ENCODE measurements at regions of chr1 and their contacts with region 1.

Region 1: DNA sequence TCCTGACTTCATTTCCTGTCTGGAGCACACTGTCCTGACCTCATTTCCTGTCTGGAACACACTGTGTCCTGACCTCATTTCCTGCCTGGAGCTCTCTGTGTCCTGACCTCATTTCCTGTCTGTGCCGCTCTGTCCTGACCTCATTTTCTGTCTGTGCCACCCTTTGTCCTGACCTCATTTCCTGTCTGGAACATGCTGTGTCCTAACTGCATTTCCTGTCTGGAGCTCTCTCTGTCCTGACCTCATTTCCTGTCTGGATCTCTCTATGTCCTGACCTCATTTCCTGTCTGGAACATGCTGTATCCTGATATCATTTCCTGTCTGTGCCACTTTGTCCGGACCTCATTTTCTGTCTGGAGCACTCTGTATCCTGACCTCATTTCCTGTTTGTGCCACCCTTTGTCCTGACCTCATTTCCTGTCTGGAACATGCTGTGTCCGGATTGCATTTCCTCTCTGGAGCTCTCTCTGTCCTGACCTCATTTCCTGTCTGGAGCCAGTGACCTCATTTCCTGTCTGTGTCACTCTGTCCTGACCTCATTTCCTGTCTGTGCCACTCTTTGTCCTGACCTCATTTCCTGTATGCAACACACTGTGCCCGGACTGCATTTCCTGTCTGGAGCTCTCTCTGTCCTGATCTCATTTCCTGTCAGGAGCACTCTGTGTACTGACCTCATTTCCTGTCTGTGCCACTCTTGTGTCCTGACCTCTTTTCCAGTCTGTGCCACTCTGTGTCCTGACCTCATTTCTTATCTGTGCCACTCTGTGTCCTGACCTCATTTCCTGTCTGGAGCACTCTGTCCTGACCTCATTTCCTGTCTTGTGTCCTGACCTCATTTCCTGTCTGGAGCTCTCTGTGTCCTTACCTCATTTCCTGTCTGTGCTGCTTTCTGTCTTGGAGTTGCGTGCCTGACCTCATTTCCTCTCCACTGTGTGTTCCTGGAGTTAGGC is 27.6 kb downstream of the SKI start:
- DNase-seq: peak; percentile 65
- ATAC-seq: peak; percentile 67
- H3K4me3 Mint-ChIP-seq: no peak overlapping the region
- H3K27ac Mint-ChIP-seq: no peak overlapping the region
- H3K4me1 Mint-ChIP-seq: peaks cover 26% of the 10 kb centered on the region
- H3K27me3 Mint-ChIP-seq: no peaks in the 10 kb centered on the region

Region 2: DNA sequence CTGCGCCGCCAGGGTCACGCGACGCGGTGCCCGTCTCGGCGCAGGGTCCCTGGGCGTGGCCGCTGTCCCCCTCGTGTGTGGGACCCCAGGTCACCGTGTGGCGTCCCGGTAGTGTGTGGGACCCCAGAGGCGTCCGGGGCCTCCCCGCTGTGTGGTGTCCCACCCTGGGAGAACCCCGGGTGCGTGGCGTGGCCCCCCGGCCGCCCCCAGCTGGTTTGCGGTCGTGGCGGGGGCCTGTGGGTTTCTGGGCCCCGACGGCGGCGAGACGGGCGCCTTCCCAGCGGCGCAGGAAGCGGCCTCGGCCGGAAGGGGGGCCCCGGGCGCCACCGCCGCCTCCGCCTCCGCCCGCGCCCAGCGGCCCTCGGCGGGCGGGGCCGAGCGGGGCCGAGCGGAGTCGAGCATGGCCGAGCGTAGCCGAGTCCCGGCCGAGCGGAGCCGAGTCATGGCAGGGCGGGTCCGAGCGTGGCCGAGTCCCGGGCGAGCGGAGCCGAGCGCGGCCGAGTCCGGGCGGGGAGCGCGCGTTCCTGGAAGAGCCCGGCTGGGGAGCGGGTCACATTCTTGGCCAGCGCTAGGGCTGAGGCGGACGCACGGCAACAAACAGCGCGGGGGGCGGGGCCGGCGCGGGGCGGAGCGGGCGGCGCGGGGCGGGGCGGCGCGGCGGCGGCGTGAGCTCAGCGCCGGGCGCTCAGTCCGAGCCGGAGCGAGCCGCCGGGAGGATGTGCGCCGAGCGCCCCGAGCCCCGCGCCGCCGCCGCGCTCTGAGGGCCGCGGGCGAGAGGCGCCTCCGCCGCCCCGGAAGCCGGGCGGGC is 28.1 kb before region 1 on chr1:
- POLR2A ChIA-PET with region 1: interaction called, 29 read pairs
- DNase-seq: peak; percentile 99
- ATAC-seq: peak; percentile 86
- H3K4me3 Mint-ChIP-seq: peak overlapping the region; percentile 66
- H3K27ac Mint-ChIP-seq: peak overlapping the region; percentile 65
- H3K4me1 Mint-ChIP-seq: peaks cover 15% of the 10 kb centered on the region
- H3K27me3 Mint-ChIP-seq: peaks cover 11% of the 10 kb centered on the region

Region 3: GRCh38 chr1:2233997-2234761 is 21.5 kb before region 1 on chr1:
- POLR2A ChIA-PET with region 1: interaction called, 29 read pairs
- DNase-seq: peak; percentile 74
- ATAC-seq: peak; percentile 81
- H3K4me3 Mint-ChIP-seq: peak overlapping the region; percentile 83
- H3K27ac Mint-ChIP-seq: peak overlapping the region; percentile 88
- H3K4me1 Mint-ChIP-seq: peaks cover 55% of the 10 kb centered on the region
- H3K27me3 Mint-ChIP-seq: no peaks in the 10 kb centered on the region

Region 4: DNA sequence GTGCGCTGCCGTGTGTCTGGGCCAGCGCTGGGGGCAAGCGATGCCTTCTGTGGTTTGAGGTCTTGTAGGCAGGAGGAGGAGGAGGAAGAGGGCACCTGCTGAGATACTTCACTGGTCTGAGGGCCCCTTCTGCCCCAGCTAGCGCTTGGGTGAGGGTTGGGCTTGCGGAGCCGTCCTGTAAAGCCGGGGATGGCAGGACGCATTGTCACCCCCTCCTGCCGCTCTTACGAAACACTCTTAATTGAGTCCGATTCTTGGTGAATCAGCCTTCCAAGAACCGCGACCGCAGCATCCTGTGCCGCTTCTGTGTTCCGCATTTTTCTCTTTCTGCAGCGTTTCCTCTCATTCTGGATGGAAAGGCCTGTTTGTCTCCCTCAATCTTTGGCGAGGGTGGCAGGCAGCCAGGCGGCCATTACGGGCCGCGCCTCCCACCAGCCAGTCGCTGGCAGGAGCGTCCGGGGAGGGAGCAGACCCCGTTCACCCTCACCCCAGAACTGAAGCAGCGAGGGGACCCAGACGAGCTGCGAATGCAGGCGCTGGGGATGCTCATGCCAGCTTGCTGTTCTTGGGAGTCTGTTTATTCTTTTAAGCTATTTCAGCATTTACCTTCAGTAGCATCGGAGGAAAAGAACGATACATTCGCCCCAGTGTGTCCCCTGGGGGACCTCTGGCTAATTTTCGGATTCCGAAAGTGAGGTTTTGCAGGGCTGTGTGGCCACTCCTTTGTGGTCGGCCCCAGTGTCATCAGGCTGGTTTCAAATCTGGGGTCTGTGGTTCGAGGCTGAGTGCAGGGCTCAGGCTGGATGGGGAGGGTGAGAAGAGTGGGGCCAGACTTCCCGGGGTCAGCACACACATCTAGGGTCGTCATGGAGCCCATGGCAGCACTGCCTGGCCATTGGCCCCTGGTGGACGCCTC is 35.2 kb after region 1 on chr1:
- POLR2A ChIA-PET with region 1: interaction called, 17 read pairs
- DNase-seq: peak; percentile 81
- ATAC-seq: peak; percentile 80
- H3K4me3 Mint-ChIP-seq: peak overlapping the region; percentile 81
- H3K27ac Mint-ChIP-seq: peak overlapping the region; percentile 95
- H3K4me1 Mint-ChIP-seq: peaks cover 53% of the 10 kb centered on the region
- H3K27me3 Mint-ChIP-seq: no peaks in the 10 kb centered on the region

Region 5: GRCh38 chr1:2300851-2301606 is 45.3 kb after region 1 on chr1:
- POLR2A ChIA-PET with region 1: interaction called, 24 read pairs
- DNase-seq: peak; percentile 83
- ATAC-seq: peak; percentile 71
- H3K4me3 Mint-ChIP-seq: peak overlapping the region; percentile 76
- H3K27ac Mint-ChIP-seq: peak overlapping the region; percentile 96
- H3K4me1 Mint-ChIP-seq: peaks cover 25% of the 10 kb centered on the region
- H3K27me3 Mint-ChIP-seq: no peaks in the 10 kb centered on the region

Region 6: GRCh38 chr1:2314803-2315673 is 59.3 kb after region 1 on chr1:
- POLR2A ChIA-PET with region 1: interaction called, 11 read pairs
- DNase-seq: peak; percentile 82
- ATAC-seq: peak; percentile 46
- H3K4me3 Mint-ChIP-seq: peak overlapping the region; percentile 68
- H3K27ac Mint-ChIP-seq: peak overlapping the region; percentile 74
- H3K4me1 Mint-ChIP-seq: peaks cover 2% of the 10 kb centered on the region
- H3K27me3 Mint-ChIP-seq: no peaks in the 10 kb centered on the region

Measured in activated naive CD8-positive, alpha-beta T cell treated with anti-CD3 and anti-CD28 coated beads, Interleukin-2, amount 10 ng/mL, durations not matched to agents 7 days and 5 days (primary cell).